ENCODE measurements at regions of chr6 and their contacts with region 1.

Region 1: GRCh38 chr6:26031595-26032339 is 55.5 kb upstream of the HFE start:
- DNase-seq: peak; percentile 82 to 99 (median 94)
- ATAC-seq: peak; percentile 67
- H3K4me3 ChIP-seq: peak overlapping the region; percentile 61
- H3K27ac ChIP-seq: peak overlapping the region; percentile 99
- H3K4me1 ChIP-seq: peaks cover 16 to 42% of the 10 kb centered on the region in 2 experiments
- H3K27me3 ChIP-seq: no peaks in the 10 kb centered on the region
- CTCF ChIP-seq: peak; percentile 28 to 60 (median 40)
- EP300 ChIP-seq: peak; percentile 77
- POLR2A ChIP-seq: peak; percentile 100
- RAD21 ChIP-seq: peak; percentile 4 to 31; a peak in 1 of 4 replicates

Region 2: GRCh38 chr6:26003102-26003694 is 28.6 kb before region 1 on chr6:
- CTCF ChIA-PET with region 1: no interaction called
- POLR2A ChIA-PET with region 1: interaction called, 206 read pairs
- in situ Hi-C with region 1: no loop called
- intact Hi-C with region 1: no loop called
- DNase-seq: peak; percentile 75 to 81 (median 76)
- ATAC-seq: peak; percentile 87
- H3K4me3 ChIP-seq: no peak overlapping the region
- H3K27ac ChIP-seq: no peak overlapping the region
- H3K4me1 ChIP-seq: peaks cover 5 to 10% of the 10 kb centered on the region in 2 experiments; a peak in 4 of 5 replicates
- H3K27me3 ChIP-seq: no peaks in the 10 kb centered on the region
- CTCF ChIP-seq: peak; percentile 77 to 87 (median 87)
- EP300 ChIP-seq: no peak
- POLR2A ChIP-seq: no peak
- RAD21 ChIP-seq: peak; percentile 64 to 77

Region 3: GRCh38 chr6:26087284-26088115 is 55.7 kb after region 1 on chr6 and contains the start of gene HFE:
- CTCF ChIA-PET with region 1: no interaction called
- POLR2A ChIA-PET with region 1: interaction called, 34 read pairs
- in situ Hi-C with region 1: no loop called
- intact Hi-C with region 1: no loop called
- DNase-seq: peak; percentile 59 to 75 (median 66)
- ATAC-seq: peak; percentile 92
- H3K4me3 ChIP-seq: peak within 1 kb of the TSS; percentile 56
- H3K27ac ChIP-seq: peak within 1 kb of the TSS; percentile 67
- H3K4me1 ChIP-seq: peaks cover 9% of the 10 kb centered on the region in 2 experiments; a peak in 4 of 5 replicates
- H3K27me3 ChIP-seq: no peaks in the 10 kb centered on the region
- CTCF ChIP-seq: peak in 1 of 3 experiments; percentile 2; a peak in 1 of 6 replicates
- EP300 ChIP-seq: no peak
- POLR2A ChIP-seq: peak; percentile 56; the same call in 1 of the 2 replicates
- RAD21 ChIP-seq: 0 out of 4 replicates have a peak, but pooled peaks of 1 of the 2 experiments have one; percentile 1
- polyA plus RNA-seq, gene HFE: 0.17 to 0.31 TPM

Region 4: DNA sequence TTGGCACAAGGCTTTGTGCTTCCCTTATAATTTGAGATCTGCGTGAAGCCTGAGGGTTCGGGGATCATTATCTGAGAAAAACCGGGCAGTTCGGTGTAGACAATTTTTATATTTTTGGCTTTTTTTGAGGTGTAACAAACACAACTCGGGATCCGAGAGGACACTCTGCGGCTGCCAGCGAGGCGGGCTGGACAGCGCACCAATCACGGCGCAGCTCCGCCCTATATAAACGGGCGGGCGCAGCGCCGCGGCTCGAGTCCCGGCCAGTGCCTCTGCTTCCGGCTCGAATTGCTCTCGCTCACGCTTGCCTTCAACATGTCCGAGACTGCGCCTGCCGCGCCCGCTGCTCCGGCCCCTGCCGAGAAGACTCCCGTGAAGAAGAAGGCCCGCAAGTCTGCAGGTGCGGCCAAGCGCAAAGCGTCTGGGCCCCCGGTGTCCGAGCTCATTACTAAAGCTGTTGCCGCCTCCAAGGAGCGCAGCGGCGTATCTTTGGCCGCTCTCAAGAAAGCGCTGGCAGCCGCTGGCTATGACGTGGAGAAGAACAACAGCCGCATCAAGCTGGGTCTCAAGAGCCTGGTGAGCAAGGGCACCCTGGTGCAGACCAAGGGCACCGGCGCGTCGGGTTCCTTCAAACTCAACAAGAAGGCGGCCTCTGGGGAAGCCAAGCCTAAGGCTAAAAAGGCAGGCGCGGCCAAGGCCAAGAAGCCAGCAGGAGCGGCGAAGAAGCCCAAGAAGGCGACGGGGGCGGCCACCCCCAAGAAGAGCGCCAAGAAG is 124.5 kb after region 1 on chr6:
- CTCF ChIA-PET with region 1: no interaction called
- POLR2A ChIA-PET with region 1: interaction called, 215 read pairs
- in situ Hi-C with region 1: no loop called
- intact Hi-C with region 1: loop called (anchors 1 kb)
- DNase-seq: peak; percentile 96 to 97 (median 97)
- ATAC-seq: peak; percentile 78
- H3K4me3 ChIP-seq: peak overlapping the region; percentile 65
- H3K27ac ChIP-seq: peak overlapping the region; percentile 85
- H3K4me1 ChIP-seq: peaks cover 12 to 18% of the 10 kb centered on the region in 2 experiments; a peak in 4 of 5 replicates
- H3K27me3 ChIP-seq: no peaks in the 10 kb centered on the region
- CTCF ChIP-seq: no peak
- EP300 ChIP-seq: peak; percentile 29
- POLR2A ChIP-seq: peak; percentile 100
- RAD21 ChIP-seq: 0 out of 4 replicates have a peak, but pooled peaks of 1 of the 2 experiments have one; percentile 21

Region 5: DNA sequence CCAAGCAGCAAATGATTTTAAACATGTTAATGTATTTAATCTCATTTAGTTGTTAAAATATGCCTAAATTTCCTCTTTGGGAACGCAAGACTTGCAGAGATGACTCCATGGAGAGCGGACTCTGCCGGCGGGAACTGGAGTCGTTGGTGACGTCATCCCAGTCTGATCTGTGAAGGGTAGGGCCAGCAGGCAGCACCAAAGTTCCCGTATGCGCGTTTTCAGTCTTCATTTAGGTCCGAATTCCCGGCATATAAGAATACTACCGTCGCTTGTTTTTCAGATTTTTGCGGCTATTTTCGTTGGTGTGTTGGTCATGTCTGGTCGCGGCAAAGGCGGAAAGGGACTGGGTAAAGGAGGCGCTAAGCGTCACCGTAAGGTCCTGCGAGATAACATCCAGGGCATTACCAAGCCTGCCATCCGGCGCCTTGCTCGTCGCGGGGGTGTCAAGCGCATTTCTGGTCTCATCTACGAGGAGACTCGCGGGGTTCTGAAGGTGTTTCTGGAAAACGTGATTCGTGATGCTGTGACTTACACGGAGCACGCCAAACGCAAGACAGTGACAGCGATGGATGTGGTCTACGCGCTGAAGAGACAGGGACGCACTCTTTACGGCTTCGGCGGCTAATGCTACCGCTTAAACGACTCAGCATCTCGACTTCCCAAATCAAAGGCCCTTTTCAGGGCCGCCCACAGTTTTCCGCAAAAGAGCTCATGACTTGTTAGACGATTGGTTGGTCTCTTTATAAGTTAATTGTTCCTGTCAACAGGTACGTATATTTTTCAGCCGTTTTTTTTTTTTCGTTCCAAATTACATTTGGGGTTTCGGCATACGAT is 172.8 kb after region 1 on chr6:
- CTCF ChIA-PET with region 1: no interaction called
- POLR2A ChIA-PET with region 1: interaction called, 225 read pairs
- in situ Hi-C with region 1: no loop called
- intact Hi-C with region 1: loop called (anchors 1 kb)
- DNase-seq: peak; percentile 85 to 99 (median 92)
- ATAC-seq: peak; percentile 67
- H3K4me3 ChIP-seq: peak overlapping the region; percentile 57
- H3K27ac ChIP-seq: peak overlapping the region; percentile 99
- H3K4me1 ChIP-seq: peaks cover 9 to 21% of the 10 kb centered on the region in 2 experiments; a peak in 4 of 5 replicates
- H3K27me3 ChIP-seq: no peaks in the 10 kb centered on the region
- CTCF ChIP-seq: peak in 2 of 3 experiments; percentile 67 to 70; a peak in 5 of 6 replicates
- EP300 ChIP-seq: peak; percentile 95
- POLR2A ChIP-seq: peak; percentile 100
- RAD21 ChIP-seq: peak in 1 of 2 experiments; percentile 29; a peak in 2 of 4 replicates

Region 6: DNA sequence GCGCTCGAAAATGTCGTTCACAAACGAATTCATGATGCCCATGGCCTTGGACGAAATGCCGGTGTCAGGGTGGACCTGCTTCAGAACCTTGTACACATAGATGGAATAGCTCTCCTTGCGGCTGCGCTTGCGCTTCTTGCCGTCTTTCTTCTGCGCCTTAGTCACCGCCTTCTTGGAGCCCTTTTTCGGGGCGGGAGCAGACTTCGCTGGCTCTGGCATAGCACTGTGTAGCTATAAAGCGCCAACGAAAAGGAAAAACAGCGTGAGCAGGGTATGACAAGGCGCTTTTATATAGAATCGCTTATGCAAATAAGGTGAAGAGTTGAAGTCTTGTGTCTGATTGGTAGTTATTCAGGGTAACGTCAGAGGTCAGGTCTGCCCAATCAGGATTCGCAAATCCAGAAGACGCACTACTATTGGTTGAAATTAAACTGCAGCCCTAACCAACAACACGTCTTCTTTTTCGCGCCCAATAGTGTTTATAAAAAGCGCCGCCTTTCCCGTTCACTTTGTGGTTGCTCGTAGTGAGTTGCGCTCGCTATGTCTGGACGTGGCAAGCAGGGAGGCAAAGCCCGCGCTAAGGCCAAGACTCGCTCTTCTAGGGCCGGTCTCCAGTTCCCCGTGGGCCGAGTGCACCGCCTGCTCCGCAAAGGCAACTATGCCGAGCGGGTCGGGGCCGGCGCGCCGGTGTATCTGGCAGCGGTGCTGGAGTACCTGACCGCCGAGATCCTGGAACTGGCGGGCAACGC is 1100.9 kb after region 1 on chr6:
- CTCF ChIA-PET with region 1: no interaction called
- POLR2A ChIA-PET with region 1: interaction called, 29 read pairs
- in situ Hi-C with region 1: loop called (anchors 5 kb)
- intact Hi-C with region 1: loop called (anchors 1 kb)
- DNase-seq: peak; percentile 93 to 100 (median 97)
- ATAC-seq: peak; percentile 68
- H3K4me3 ChIP-seq: peak overlapping the region; percentile 72
- H3K27ac ChIP-seq: peak overlapping the region; percentile 98
- H3K4me1 ChIP-seq: peaks cover 6 to 7% of the 10 kb centered on the region in 2 experiments
- H3K27me3 ChIP-seq: no peaks in the 10 kb centered on the region
- CTCF ChIP-seq: peak in 1 of 3 experiments; percentile 7; a peak in 1 of 6 replicates
- EP300 ChIP-seq: peak; percentile 26; the same call in 1 of the 2 replicates
- POLR2A ChIP-seq: peak; percentile 100
- RAD21 ChIP-seq: peak in 1 of 2 experiments; percentile 36; a peak in 2 of 4 replicates